CD4-positive, alpha-beta memory T cell (primary cell): ENCODE measurements at regions of chr15 and their contacts with region 1.

Region 1: DNA sequence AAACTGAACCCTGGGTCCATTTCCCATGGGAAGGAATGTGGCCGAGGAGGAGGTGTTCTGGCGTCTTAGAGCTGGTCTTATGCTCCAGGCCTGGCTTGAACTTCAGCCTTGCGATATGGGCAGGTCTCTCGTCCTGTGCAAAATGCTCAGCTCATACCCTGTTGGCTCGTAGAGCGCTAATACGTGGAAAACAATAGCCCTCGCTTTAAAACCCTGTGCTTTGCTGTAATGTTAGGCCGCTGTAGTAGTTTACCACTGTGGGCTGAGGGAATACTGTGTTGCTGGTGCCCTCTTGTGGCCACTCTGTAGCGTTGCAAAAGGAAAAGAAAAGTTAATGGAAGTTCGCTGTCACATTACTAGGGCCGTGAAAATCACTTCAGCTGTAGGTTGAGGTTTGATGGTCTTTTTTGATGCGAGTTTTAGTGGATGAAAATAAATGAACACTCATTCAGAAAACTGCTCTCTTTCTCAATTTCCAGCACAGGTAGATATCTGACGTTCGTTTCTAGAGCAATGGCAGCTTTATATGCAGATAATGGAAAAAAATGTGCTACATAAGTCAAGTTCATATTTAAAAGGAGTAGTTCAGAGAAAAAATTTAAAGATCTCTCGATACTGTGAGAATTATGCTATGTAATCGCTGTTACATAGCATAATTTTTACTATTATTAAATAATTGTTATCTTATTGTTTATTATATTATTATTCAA is 92.9 kb downstream of the MCTP2 start:
- DNase-seq: peak; percentile 38 to 55 (median 45)
- H3K4me3 ChIP-seq: no peak overlapping the region
- H3K4me3 Mint-ChIP-seq: no peak overlapping the region
- H3K27ac ChIP-seq: no peak overlapping the region
- H3K27ac Mint-ChIP-seq: peak overlapping the region in 4 of 7 donors; percentile 52 to 74 (median 57)
- H3K4me1 ChIP-seq: no peaks in the 10 kb centered on the region
- H3K4me1 Mint-ChIP-seq: peaks cover 5 to 9% (median 6%) of the 10 kb centered on the region in 4 donors
- H3K27me3 ChIP-seq: no peaks in the 10 kb centered on the region
- H3K27me3 Mint-ChIP-seq: no peaks in the 10 kb centered on the region

Region 2: DNA sequence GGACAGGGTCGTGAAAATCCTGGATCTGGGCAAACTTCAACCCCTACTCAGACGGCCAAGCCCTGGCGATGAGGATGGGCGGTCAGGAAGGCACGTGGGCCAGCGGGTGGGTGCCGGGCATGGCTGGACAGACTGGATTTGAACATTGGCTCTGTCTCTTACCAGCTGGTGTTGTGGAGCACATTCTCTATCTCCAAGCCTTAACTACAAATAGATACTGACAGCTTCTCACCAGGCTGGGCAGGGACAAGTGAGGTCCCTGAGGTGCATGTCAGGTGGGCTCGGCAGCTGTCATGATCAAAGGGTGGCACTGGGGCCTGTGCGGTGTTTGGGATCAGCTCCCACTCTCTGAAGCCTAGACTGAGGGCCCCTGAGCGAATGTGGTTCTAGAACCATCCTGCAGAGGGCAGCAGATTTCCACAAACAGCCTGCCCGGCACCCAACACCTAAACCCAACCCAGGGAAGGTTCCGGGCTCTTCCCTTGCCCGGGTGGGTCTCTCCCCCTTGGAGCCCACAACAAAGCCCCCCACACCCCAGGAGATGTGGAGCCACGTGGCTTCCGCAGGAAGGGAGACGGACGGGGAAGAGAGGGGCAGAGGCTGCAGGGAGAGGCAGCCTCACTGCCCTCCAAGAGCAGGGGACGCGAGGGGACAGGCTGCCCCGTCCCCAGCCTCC is 1293.7 kb before region 1 on chr15:
- CTCF ChIA-PET with region 1: interaction called, 21 read pairs
- POLR2A ChIA-PET with region 1: no interaction called
- intact Hi-C with region 1: loop called (anchors 1 kb)
- DNase-seq: peak in 4 of 5 donors; percentile 57 to 71 (median 63)
- H3K4me3 ChIP-seq: no peak overlapping the region
- H3K4me3 Mint-ChIP-seq: peak overlapping the region in 1 of 8 donors; percentile 27
- H3K27ac ChIP-seq: no peak overlapping the region
- H3K27ac Mint-ChIP-seq: peak overlapping the region; percentile 17 to 85 (median 66)
- H3K4me1 ChIP-seq: peaks cover 22% of the 10 kb centered on the region
- H3K4me1 Mint-ChIP-seq: peaks cover 14 to 29% (median 19%) of the 10 kb centered on the region in 4 donors
- H3K27me3 ChIP-seq: no peaks in the 10 kb centered on the region
- H3K27me3 Mint-ChIP-seq: no peaks in the 10 kb centered on the region

Region 3: GRCh38 chr15:94163999-94164807 is 160.1 kb before region 1 on chr15:
- CTCF ChIA-PET with region 1: interaction called, 246 read pairs
- POLR2A ChIA-PET with region 1: interaction called, 11 read pairs
- intact Hi-C with region 1: no loop called
- DNase-seq: peak in 4 of 5 donors; percentile 20 to 41 (median 33)
- H3K4me3 ChIP-seq: no peak overlapping the region
- H3K4me3 Mint-ChIP-seq: no peak overlapping the region
- H3K27ac ChIP-seq: no peak overlapping the region
- H3K27ac Mint-ChIP-seq: no peak overlapping the region
- H3K4me1 ChIP-seq: no peaks in the 10 kb centered on the region
- H3K4me1 Mint-ChIP-seq: no peaks in the 10 kb centered on the region
- H3K27me3 ChIP-seq: no peaks in the 10 kb centered on the region
- H3K27me3 Mint-ChIP-seq: peaks cover 2 to 4% of the 10 kb centered on the region in 2 donors

Region 4: GRCh38 chr15:94230956-94231722 is 93.1 kb before region 1 on chr15 and contains the start of gene MCTP2:
- CTCF ChIA-PET with region 1: interaction called, 30 read pairs
- POLR2A ChIA-PET with region 1: no interaction called
- intact Hi-C with region 1: loop called (anchors 1 kb)
- DNase-seq: peak; percentile 79 to 86 (median 81)
- H3K4me3 ChIP-seq: peak within 1 kb of the TSS; percentile 64 to 85
- H3K4me3 Mint-ChIP-seq: peak within 1 kb of the TSS; percentile 92 to 97 (median 95)
- H3K27ac ChIP-seq: peak within 1 kb of the TSS; percentile 71
- H3K27ac Mint-ChIP-seq: peak within 1 kb of the TSS; percentile 91 to 98 (median 97)
- H3K4me1 ChIP-seq: peaks cover 36% of the 10 kb centered on the region
- H3K4me1 Mint-ChIP-seq: peaks cover 30 to 62% (median 46%) of the 10 kb centered on the region in 4 donors
- H3K27me3 ChIP-seq: no peaks in the 10 kb centered on the region
- H3K27me3 Mint-ChIP-seq: no peaks in the 10 kb centered on the region
- total RNA-seq, gene MCTP2: 18.3 to 19.6 TPM

Region 5: DNA sequence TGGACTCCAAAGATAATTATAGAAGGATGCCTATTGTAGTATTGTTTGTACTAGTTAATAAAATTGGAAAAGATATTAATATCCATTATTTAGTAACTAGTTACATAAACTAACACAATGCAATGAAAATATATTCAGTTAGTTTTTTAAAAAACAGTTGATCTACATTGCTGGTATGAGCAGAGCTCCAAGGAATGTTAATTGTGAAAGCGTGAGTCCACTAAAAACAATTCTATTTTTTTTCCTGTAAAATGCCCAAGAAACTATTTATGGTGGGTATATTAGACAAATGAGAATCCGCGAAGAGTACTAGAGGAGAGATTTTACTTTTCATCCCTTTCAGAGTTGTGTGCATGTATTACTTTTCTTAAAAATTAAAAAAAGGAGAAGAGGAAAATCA is 11.3 kb after region 1 on chr15:
- CTCF ChIA-PET with region 1: interaction called, 42 read pairs
- POLR2A ChIA-PET with region 1: no interaction called
- intact Hi-C with region 1: no loop called
- DNase-seq: no peak
- H3K4me3 ChIP-seq: no peak overlapping the region
- H3K4me3 Mint-ChIP-seq: no peak overlapping the region
- H3K27ac ChIP-seq: no peak overlapping the region
- H3K27ac Mint-ChIP-seq: no peak overlapping the region
- H3K4me1 ChIP-seq: no peaks in the 10 kb centered on the region
- H3K4me1 Mint-ChIP-seq: no peaks in the 10 kb centered on the region
- H3K27me3 ChIP-seq: no peaks in the 10 kb centered on the region
- H3K27me3 Mint-ChIP-seq: no peaks in the 10 kb centered on the region

Region 6: GRCh38 chr15:94375997-94376396 is 51.7 kb after region 1 on chr15:
- CTCF ChIA-PET with region 1: no interaction called
- POLR2A ChIA-PET with region 1: no interaction called
- intact Hi-C with region 1: no loop called
- DNase-seq: no peak
- H3K4me3 ChIP-seq: no peak overlapping the region
- H3K4me3 Mint-ChIP-seq: no peak overlapping the region
- H3K27ac ChIP-seq: no peak overlapping the region
- H3K27ac Mint-ChIP-seq: no peak overlapping the region
- H3K4me1 ChIP-seq: no peaks in the 10 kb centered on the region
- H3K4me1 Mint-ChIP-seq: no peaks in the 10 kb centered on the region
- H3K27me3 ChIP-seq: no peaks in the 10 kb centered on the region
- H3K27me3 Mint-ChIP-seq: no peaks in the 10 kb centered on the region